Left ventricle myocardium superior (tissue), 1 donor: ENCODE measurements at regions of chr5 and their contacts with region 1.

Region 1: GRCh38 chr5:174317259-174317894 is 271.9 kb downstream of the NSG2 start:
- DNase-seq: peak; percentile 47
- ATAC-seq: peak; percentile 89

Region 2: DNA sequence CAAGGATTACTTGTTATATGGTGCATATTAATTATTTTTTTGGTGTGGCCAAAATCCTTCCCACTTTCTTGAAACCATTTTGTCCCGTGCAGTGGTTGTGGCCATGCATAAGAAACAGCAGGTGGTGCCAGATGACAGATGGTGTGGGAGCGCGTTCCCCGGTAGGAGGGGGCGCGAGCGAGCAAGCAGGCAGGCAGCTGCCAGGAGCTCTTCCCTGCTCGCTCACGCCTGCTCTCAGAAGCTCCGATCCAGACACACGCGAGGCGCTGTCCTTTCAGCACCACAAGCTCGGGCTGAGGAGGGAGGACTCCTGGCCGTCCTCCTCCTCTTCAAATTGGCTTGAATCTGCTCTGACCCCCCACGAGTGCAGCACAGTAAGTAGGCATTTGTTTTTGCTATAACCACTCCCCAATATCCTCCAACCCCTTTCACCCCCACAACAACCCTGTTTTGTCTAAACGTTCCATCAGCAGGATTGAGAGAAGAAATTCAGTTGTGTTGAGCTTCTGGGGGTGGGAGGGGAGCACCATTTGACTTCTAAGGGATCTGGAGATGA is 271.8 kb before region 1 on chr5 and contains the start of gene NSG2:
- intact Hi-C with region 1: loop called (anchors 5 kb)
- DNase-seq: peak; percentile 90
- ATAC-seq: peak; percentile 100
- total RNA-seq, gene NSG2: 0.27 TPM